Activated CD4-positive, alpha-beta memory T cell treated with anti-CD3 and anti-CD28 coated beads for 36 hours (primary cell): ENCODE measurements at regions of chr12 and their contacts with region 1.

Region 1: DNA sequence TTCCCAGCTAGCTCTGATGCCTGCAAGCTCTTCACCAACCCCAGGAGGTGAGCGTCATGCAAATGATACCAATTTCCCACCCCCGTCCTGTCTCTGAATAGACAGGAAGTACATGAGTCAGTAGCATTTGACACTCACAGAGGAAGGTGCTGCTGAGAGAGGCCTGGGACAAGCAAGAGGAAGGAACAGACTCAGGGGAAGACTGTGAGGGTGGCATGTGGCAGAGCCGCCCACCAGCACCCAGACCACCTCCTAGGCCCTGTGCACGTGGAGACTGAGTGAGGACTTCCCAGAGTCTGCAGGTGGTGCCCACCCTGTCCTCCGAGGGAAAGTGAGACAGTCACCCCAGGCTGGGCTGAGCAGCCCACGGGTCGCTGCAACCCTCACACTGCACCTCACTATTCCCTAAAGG is 199.5 kb upstream of the SFSWAP start:
- DNase-seq: peak; percentile 75
- H3K4me3 Mint-ChIP-seq: no peak overlapping the region
- H3K27ac Mint-ChIP-seq: peak overlapping the region; percentile 46
- H3K4me1 Mint-ChIP-seq: peaks cover 16% of the 10 kb centered on the region
- H3K27me3 Mint-ChIP-seq: peaks cover 5% of the 10 kb centered on the region

Region 2: GRCh38 chr12:131487388-131488124 is 23.8 kb before region 1 on chr12:
- CTCF ChIA-PET with region 1: no interaction called
- POLR2A ChIA-PET with region 1: no interaction called
- intact Hi-C with region 1: no loop called
- DNase-seq: peak; percentile 45
- H3K4me3 Mint-ChIP-seq: no peak overlapping the region
- H3K27ac Mint-ChIP-seq: peak overlapping the region; percentile 71
- H3K4me1 Mint-ChIP-seq: peaks cover 13% of the 10 kb centered on the region
- H3K27me3 Mint-ChIP-seq: no peaks in the 10 kb centered on the region

Region 3: GRCh38 chr12:131536337-131536736 is 24.9 kb after region 1 on chr12:
- CTCF ChIA-PET with region 1: interaction called, 3 read pairs
- POLR2A ChIA-PET with region 1: no interaction called
- intact Hi-C with region 1: loop called (anchors 1 kb)
- DNase-seq: peak; percentile 71
- H3K4me3 Mint-ChIP-seq: no peak overlapping the region
- H3K27ac Mint-ChIP-seq: no peak overlapping the region
- H3K4me1 Mint-ChIP-seq: peaks cover 41% of the 10 kb centered on the region
- H3K27me3 Mint-ChIP-seq: no peaks in the 10 kb centered on the region